ENCODE measurements at regions of chr1 and their contacts with region 1.

Region 1: DNA sequence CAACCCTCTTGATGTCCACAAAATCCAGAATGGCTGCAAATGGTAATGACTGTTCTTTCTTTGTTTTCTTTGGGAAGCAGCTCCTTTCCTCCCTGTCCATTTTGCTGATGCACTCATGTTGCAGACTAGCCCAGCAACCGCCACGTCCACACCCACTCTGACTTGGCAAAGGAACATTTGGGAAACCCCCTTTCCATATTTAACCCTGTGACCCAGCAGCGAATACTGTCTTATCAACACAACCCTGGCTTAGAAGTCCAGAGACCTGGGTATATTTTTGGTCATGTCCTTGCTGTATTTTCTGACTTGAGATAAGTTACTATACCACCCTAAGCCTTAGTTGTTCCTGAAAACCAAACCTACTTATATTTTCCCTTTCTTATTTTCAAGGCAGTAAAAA is 18.1 kb upstream of the SHE start:
- DNase-seq: no peak
- ATAC-seq: no peak
- H3K4me3 ChIP-seq: no peak overlapping the region
- H3K27ac ChIP-seq: no peak overlapping the region
- H3K4me1 ChIP-seq: peaks cover 0 to 4% of the 10 kb centered on the region in 2 experiments; a peak in 1 of 5 replicates
- H3K27me3 ChIP-seq: peaks cover 21 to 49% of the 10 kb centered on the region in 2 experiments
- CTCF ChIP-seq: no peak
- EP300 ChIP-seq: no peak
- POLR2A ChIP-seq: no peak
- RAD21 ChIP-seq: no peak

Region 2: DNA sequence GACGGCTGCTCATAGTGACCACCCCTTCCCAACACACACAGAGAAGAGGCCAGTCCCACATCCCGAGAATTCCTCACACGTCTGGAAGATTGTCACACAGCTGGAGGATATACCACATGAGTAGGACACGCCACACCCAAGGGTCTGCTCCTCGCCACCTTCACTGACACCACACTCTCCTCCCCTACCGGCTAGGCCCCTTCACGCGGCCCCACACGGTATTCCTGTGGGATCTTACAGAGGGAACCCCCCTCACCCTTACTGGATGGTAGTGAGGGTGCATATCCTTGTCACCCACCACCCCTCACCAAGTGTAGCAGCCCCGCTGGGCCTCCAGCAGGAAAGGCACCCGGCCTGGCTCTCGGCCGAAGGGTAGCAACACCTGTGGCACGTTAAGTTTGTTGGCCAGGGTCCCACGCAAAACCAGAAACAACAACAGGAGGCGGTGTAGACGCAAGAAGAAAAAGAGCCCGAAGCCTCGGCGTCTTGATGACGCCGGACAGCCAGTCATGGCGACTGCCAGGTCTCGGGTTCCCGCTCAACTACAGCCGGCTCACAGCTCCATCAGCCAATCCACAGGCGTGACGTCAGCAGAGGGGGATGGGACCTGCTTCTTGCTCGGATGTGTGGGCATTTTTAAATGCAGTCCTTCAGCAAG is 365.7 kb before region 1 on chr1 and contains the start of gene NUP210L:
- CTCF ChIA-PET with region 1: no interaction called
- POLR2A ChIA-PET with region 1: no interaction called
- in situ Hi-C with region 1: no loop called
- intact Hi-C with region 1: no loop called
- DNase-seq: peak in 2 of 4 experiments; percentile 34 to 38
- ATAC-seq: no peak
- H3K4me3 ChIP-seq: no peak within 1 kb of the TSS
- H3K27ac ChIP-seq: peak within 1 kb of the TSS; percentile 64; the same call in 2 of the 3 replicates
- H3K4me1 ChIP-seq: peaks cover 20 to 44% of the 10 kb centered on the region in 2 experiments
- H3K27me3 ChIP-seq: no peaks in the 10 kb centered on the region
- CTCF ChIP-seq: 0 out of 6 replicates have a peak, but pooled peaks of 2 of the 3 experiments have one; percentile 5 to 8
- EP300 ChIP-seq: no peak
- POLR2A ChIP-seq: no peak
- RAD21 ChIP-seq: no peak
- polyA plus RNA-seq, gene NUP210L: not detected

Region 3: DNA sequence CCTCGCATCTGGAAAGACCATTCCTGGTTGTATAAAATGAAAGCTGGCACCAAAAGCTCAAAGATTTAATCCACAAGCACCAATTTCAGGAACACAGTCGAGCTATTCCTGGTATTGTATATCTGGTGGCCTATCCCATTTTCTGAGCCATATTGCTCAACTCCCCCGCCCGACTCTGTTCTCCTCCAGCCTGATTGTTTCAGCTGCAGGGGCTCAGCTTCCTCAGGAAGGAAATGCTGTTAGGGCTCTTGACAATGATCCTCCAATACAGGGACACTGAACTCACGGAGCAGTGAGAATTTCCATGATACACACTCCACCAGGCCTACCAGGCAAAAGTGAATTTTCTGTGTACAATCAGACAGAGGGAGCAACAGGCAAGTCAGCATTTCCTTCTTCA is 35.2 kb before region 1 on chr1:
- CTCF ChIA-PET with region 1: no interaction called
- POLR2A ChIA-PET with region 1: interaction called, 3 read pairs
- in situ Hi-C with region 1: loop called (anchors 5 kb)
- intact Hi-C with region 1: no loop called
- DNase-seq: no peak
- ATAC-seq: no peak
- H3K4me3 ChIP-seq: no peak overlapping the region
- H3K27ac ChIP-seq: no peak overlapping the region
- H3K4me1 ChIP-seq: peaks cover 6 to 14% of the 10 kb centered on the region in 2 experiments; a peak in 4 of 5 replicates
- H3K27me3 ChIP-seq: peaks cover 3 to 7% of the 10 kb centered on the region in 2 experiments; a peak in 1 of 5 replicates
- CTCF ChIP-seq: no peak
- EP300 ChIP-seq: no peak
- POLR2A ChIP-seq: no peak
- RAD21 ChIP-seq: no peak